Activated T-helper 2 cell treated with anti-CD3 and anti-CD28 coated beads, Interferon-gamma antibody, Interleukin-2, Interleukin-4, amounts not matched to agents 10 μg/mL and 5 μg/mL and 100 μg/mL, durations not matched to agents 14 hours and 24 hours and 36 hours (primary cell): ENCODE measurements at regions of chr11 and their contacts with region 1.

Region 1: DNA sequence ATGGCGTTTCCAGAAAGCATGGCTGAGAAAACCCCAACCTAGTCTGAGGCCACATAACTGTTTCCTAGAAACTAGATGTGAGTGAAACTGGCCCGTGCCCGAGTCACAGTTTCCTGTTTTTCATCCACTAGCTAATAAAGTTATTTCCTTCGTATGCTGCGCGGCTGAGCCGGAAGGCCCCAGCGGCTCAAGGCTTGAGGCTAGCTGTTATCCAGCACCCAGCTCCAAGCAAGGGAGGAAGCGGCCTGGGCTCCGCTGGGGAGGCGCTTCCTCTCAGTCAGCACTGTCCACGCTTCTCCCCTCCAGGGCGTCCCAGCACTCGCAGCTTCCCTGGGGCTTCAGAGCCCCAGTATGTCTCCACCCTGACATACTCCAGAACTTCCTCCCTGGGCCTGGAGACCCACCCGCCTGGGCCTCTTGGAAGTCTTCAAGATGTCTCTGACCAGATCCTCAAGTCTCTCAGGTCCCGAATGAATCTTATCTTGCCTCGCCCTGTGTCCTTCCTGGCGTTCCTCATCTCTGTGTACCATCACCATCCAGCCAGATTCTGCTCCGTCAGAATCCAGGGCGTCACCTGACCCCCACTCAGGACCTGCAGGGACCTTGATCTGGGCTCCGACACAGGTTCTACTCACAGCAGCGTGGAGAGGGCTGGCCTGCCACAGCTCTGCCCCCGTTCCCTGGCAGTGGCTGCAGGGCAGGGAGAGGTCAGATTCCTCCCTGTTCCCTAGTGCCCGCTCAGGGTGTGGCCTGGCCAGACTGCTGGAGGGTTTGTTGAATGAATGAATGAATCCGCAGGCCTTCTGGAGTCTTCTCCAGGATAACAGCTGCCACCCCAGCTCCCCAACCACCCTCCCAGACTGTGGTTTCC is 81.9 kb downstream of the LRRC32 start:
- DNase-seq: peak; percentile 64
- H3K4me3 Mint-ChIP-seq: peak overlapping the region; percentile 4
- H3K27ac Mint-ChIP-seq: peak overlapping the region; percentile 96
- H3K4me1 Mint-ChIP-seq: peaks cover 64% of the 10 kb centered on the region
- H3K27me3 Mint-ChIP-seq: no peaks in the 10 kb centered on the region

Region 2: DNA sequence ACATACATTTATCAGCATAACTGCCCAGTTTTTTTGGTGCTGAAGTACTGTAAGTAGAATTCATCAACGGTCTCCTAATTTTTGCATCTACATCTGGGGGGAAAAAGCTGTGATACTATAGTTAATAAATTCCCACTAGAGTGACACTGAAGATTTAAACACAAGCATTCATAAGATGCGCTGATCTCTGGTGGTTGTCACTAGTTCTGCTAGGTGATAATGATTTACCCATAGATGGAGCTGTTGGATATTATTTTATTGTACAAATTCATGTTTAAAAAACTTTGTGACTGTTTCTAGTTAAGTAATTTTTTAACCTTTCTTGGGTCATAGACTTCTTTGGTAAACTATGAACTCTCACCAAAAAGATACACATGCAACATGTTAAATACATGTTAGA is 37.3 kb before region 1 on chr11:
- intact Hi-C with region 1: loop called (anchors 5 kb)
- DNase-seq: no peak
- H3K4me3 Mint-ChIP-seq: no peak overlapping the region
- H3K27ac Mint-ChIP-seq: no peak overlapping the region
- H3K4me1 Mint-ChIP-seq: peaks cover 7% of the 10 kb centered on the region
- H3K27me3 Mint-ChIP-seq: no peaks in the 10 kb centered on the region

Region 3: DNA sequence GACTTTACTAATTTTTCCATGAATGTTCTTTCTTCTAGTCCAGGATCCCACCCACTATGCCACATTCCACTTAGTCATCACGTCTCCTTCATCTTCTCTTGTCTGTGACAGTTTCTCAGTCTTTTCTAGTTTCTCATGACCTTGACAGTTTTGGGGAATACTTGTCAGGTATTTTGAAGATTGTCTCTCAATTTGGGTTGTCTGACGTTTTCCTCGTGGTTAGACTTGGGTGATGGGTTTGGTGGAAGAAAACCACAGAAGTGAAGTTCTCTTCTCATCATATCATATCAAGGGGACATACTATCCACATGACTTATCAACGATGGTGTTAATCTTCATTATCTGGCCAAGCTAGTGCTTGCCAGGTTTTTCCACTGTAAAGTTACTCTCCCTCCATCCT is 20.6 kb before region 1 on chr11:
- intact Hi-C with region 1: loop called (anchors 2 kb)
- DNase-seq: no peak
- H3K4me3 Mint-ChIP-seq: no peak overlapping the region
- H3K27ac Mint-ChIP-seq: peak overlapping the region; percentile 85
- H3K4me1 Mint-ChIP-seq: peaks cover 32% of the 10 kb centered on the region
- H3K27me3 Mint-ChIP-seq: no peaks in the 10 kb centered on the region

Region 4: DNA sequence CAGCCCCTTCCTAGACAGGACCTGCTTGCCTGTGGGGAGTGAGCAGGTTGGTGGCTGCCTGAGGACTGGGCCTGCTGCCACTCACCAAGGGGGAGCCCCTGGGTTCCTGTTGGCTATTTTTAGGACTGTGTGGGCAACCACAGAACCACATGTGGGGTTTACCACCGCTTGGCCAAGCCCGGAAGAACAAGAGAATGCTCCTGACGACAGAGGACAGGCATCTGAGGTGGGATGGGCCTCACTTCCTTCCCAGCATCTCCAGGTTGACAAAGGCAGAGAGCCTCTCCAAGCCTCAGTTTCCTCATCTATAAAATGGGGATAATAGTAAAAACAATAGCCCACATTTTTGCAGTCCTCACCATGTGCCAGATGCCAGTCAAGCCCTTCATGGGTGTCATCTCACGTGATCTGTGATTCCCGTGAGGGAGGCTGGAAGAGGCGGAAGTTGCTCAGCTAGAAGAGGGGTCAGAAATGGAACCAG is 38.3 kb after region 1 on chr11:
- intact Hi-C with region 1: loop called (anchors 1 kb)
- DNase-seq: peak; percentile 69
- H3K4me3 Mint-ChIP-seq: no peak overlapping the region
- H3K27ac Mint-ChIP-seq: peak overlapping the region; percentile 94
- H3K4me1 Mint-ChIP-seq: peaks cover 51% of the 10 kb centered on the region
- H3K27me3 Mint-ChIP-seq: no peaks in the 10 kb centered on the region

Region 5: DNA sequence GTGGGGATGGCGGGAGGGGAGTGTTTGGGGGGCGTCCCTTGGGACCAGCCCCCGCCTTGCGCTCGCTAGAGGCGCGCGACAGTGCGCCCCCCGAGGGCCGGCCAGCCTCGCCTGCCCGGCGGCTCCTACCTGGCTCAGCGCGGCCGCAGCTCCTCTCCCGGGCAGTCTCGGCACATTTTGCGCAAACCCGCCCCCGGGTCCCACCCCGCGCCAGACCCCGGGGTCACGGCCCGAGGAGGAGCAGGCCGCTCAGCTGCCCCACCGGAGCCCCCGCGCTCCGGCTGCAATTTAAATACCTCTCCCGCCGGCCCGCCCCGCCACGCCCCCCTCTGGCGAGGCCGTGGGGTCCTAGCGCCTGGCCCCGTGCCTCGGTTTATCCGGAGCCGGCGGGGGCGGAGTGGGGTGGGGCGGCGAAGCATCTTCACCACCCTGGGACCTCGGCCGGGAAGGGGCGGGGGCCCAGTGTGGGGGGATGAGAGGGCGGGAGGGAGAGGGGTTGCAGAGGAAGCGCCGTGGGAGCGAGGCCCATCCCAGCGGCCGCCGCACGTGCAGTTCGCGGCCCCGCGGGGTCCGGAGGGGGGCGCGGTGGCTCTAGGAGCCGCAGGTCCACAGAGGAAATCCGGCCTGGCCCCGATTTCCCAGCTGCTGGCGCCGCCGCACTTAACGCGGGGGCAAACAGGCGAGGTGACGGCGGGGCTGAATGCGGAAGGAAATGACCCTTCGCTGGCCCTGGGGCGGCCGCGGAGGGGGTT is 82.0 kb after region 1 on chr11 and contains the start of gene LRRC32:
- intact Hi-C with region 1: loop called (anchors 2 kb)
- DNase-seq: no peak
- H3K4me3 Mint-ChIP-seq: peak within 1 kb of the TSS; percentile 84
- H3K27ac Mint-ChIP-seq: no peak within 1 kb of the TSS
- H3K4me1 Mint-ChIP-seq: peaks cover 60% of the 10 kb centered on the region
- H3K27me3 Mint-ChIP-seq: peaks cover 3% of the 10 kb centered on the region
- total RNA-seq, gene LRRC32: 26.5 and 26.7 TPM in 2 replicates

Region 6: DNA sequence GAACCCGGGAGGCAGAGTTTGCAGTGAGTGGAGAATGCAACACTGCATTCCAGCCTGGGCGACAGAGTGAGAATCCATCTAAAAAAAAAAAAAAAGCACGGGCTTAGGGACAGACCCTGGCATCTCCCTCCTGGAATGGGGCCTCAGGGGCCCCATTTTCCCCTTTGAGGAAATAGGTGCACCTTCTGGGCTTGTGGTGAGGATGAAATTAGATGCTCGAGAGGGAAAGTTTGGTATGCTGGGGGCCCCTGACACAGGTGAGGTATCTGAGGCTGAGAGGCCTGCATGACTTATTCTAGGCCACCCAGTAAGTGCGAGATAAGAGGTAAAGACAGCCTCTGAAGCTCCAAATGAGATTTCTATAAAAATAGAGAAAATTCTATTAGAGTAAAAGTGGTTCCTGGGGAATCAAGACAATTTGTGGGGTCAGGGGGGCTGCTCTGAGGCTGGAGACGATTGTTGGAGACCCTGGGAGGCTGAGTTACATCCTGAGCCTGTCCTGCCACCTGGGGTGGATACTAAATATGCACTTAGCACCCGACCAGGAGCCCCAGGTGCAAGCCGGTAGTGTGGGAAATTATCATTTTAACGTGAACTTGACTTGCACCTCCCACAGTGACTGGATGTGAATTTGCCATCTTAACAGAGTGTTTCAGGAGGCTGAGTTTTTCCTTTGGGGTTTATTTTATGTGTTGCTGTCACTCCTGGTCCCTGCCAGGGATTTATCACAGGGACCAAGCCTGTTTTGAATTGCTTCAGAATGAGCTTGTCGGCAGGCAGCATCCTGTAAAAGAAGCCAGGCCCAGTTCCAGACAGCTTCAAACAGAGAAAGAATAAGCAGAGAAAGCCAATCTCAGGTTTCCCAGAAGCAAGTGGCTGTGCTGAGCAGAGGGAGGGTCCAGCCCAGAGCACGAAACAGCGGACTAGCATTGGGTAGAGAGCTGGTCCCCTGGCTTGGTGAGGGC is 146.0 kb after region 1 on chr11:
- intact Hi-C with region 1: no loop called
- DNase-seq: no peak
- H3K4me3 Mint-ChIP-seq: no peak overlapping the region
- H3K27ac Mint-ChIP-seq: no peak overlapping the region
- H3K4me1 Mint-ChIP-seq: peaks cover 2% of the 10 kb centered on the region
- H3K27me3 Mint-ChIP-seq: peaks cover 5% of the 10 kb centered on the region